ENCODE measurements at regions of chr3 and their contacts with region 1.

Region 1: DNA sequence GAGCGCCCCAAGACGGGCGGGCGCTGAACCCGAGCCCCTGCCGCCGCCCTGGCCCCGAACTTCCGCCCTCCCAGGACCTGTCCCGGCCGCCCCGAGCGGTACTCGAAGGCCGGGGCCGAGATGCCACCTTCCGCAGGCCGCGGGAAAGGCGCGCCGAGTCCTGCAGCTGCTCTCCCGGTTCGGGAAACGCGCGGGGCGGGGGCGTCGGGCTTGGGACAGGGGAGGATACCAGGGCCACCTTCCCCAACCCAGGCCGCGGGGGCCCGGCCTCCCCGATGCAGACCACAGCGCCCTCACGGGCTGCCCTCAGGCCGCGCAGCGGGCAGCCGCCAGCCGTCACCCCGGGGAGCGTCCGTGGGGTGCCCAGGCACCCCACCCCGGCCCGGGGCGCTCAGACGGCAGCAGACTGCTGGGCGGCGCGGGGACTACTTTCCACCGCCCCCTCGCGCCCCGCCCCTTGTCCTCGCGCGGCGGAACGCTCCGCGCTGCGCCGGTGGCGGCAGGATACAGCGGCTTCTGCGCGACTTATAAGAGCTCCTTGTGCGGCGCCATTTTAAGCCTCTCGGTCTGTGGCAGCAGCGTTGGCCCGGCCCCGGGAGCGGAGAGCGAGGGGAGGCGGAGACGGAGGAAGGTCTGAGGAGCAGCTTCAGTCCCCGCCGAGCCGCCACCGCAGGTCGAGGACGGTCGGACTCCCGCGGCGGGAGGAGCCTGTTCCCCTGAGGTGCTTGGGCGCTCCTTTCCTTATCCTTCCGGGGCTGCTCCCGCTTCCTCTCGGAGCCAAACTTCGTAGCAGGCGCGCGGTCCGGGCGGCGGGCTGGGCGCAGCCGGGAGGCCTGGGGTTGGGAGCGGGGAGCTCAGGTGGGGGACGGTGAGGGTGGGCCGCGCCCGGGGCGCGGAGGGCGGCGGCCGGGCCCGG is at the start of gene CTNNB1:
- DNase-seq: peak; percentile 95
- ATAC-seq: peak; percentile 86
- H3K4me3 ChIP-seq: peak within 1 kb of the TSS; percentile 69
- H3K27ac ChIP-seq: peak within 1 kb of the TSS; percentile 86
- H3K4me1 ChIP-seq: peaks cover 2% of the 10 kb centered on the region; the same call in 1 of the 2 replicates
- H3K27me3 ChIP-seq: no peaks in the 10 kb centered on the region; the same call in none of the 2 replicates
- CTCF ChIP-seq: no peak
- POLR2A ChIP-seq: peak; percentile 99
- RAD21 ChIP-seq: no peak
- total RNA-seq, gene CTNNB1: 1,415 and 1,677 TPM in 2 replicates

Region 2: GRCh38 chr3:40337136-40338108 is 861.8 kb before region 1 on chr3:
- CTCF ChIA-PET with region 1: no interaction called
- POLR2A ChIA-PET with region 1: no interaction called
- dilution Hi-C with region 1: no loop called
- in situ Hi-C with region 1: loop called (anchors 25 kb)
- intact Hi-C with region 1: no loop called
- DNase-seq: no peak
- ATAC-seq: no peak
- H3K4me3 ChIP-seq: no peak overlapping the region
- H3K27ac ChIP-seq: no peak overlapping the region
- H3K4me1 ChIP-seq: no peaks in the 10 kb centered on the region
- H3K27me3 ChIP-seq: peaks cover 2% of the 10 kb centered on the region; the same call in 1 of the 2 replicates
- CTCF ChIP-seq: no peak
- POLR2A ChIP-seq: no peak
- RAD21 ChIP-seq: no peak

Region 3: DNA sequence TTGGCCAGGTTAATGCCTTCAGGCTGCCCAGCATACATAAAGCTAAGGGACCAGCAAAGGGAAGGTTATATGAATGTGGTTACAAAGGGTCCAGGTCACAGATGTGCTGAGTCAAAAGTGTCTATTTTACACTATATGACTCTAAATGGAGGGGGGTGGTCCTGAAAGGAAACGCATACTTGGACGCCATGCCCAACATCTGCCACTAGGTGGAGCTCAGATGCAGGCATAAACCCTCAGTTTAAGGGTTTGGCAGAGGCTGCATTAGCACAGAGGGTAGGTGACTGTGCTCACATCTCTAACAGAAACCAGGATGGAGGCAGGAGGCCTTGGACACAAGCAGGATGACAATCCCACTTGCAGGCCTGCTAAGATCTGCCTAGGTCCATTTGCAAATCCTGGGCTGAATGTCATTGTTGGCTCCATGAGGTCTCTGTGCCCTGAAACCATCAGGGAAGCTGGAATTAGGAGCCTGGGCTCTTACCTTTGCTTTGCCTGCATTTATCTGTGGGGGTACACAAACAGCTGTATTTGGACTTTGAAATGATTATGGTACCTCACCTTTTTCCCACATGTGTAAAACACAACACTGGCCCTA is 618.6 kb before region 1 on chr3:
- CTCF ChIA-PET with region 1: no interaction called
- POLR2A ChIA-PET with region 1: no interaction called
- dilution Hi-C with region 1: no loop called
- in situ Hi-C with region 1: no loop called
- intact Hi-C with region 1: loop called (anchors 5 kb)
- DNase-seq: peak; percentile 60
- ATAC-seq: peak; percentile 86
- H3K4me3 ChIP-seq: no peak overlapping the region
- H3K27ac ChIP-seq: no peak overlapping the region
- H3K4me1 ChIP-seq: no peaks in the 10 kb centered on the region
- H3K27me3 ChIP-seq: peaks cover 10% of the 10 kb centered on the region; the same call in 1 of the 2 replicates
- CTCF ChIP-seq: peak; percentile 84
- POLR2A ChIP-seq: no peak
- RAD21 ChIP-seq: peak; percentile 90

Region 4: DNA sequence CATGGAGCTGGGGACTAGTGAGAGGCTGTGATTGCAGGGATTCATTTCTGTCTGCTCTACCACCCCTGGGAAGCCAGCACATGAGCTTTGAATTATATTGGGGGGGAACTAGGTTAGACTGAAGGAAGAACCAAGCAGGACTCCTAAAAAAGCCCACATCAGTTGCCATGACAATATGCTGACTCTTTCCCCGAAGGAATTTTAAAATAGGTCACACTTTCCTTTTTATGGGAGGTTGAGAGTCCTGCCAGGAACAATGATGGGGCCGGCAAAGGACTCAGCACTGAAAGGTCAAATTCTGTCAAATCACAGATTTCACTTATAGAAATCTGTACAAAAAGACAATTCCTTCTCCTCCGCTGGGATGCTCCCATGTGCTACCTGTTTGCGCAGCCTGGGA is 543.7 kb before region 1 on chr3:
- CTCF ChIA-PET with region 1: no interaction called
- POLR2A ChIA-PET with region 1: interaction called, 11 read pairs
- dilution Hi-C with region 1: no loop called
- in situ Hi-C with region 1: no loop called
- intact Hi-C with region 1: no loop called
- DNase-seq: no peak
- ATAC-seq: no peak
- H3K4me3 ChIP-seq: no peak overlapping the region
- H3K27ac ChIP-seq: no peak overlapping the region
- H3K4me1 ChIP-seq: no peaks in the 10 kb centered on the region
- H3K27me3 ChIP-seq: no peaks in the 10 kb centered on the region
- CTCF ChIP-seq: no peak
- POLR2A ChIP-seq: no peak
- RAD21 ChIP-seq: no peak

Region 5: DNA sequence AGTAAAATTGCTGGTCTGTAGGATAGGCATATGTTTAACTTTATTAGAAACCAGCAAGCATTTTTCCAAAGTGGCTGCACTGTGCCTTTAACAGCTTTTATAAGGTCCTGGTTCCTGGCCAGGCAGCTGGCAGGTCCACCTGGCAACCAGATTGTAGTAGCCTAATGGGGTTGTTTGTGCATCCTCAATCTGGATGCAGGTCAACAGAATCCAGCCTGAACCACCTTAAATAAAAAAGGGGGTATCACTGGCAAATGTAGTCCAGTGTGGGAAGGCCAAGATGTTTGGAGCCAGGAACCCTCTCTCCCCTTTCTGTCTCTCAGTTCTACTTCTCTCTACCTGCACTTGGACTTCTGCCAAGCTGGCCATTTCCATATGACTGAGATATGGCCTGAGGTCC is 474.2 kb before region 1 on chr3:
- CTCF ChIA-PET with region 1: no interaction called
- POLR2A ChIA-PET with region 1: no interaction called
- dilution Hi-C with region 1: no loop called
- in situ Hi-C with region 1: no loop called
- intact Hi-C with region 1: no loop called
- DNase-seq: no peak
- ATAC-seq: no peak
- H3K4me3 ChIP-seq: no peak overlapping the region
- H3K27ac ChIP-seq: no peak overlapping the region
- H3K4me1 ChIP-seq: no peaks in the 10 kb centered on the region
- H3K27me3 ChIP-seq: no peaks in the 10 kb centered on the region
- CTCF ChIP-seq: no peak
- POLR2A ChIP-seq: no peak
- RAD21 ChIP-seq: no peak

Region 6: DNA sequence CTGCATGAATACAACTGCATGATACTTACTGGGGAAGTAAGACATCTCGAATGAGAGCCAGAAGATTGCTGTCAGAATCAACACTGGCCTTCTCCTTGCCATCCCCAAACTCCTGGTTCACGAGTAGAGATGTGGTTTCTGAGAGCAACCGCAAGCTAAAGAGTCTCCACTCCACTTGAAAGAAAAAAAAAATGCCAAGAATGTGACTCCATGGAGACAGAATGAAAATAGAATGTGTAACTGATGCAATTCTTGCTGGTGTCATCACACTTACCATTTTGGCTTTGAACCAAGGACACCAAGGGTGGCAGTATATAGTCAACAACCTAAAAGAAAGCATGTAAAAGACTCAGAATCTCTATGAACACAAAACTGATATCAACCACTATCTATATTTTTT is 482.3 kb after region 1 on chr3:
- CTCF ChIA-PET with region 1: no interaction called
- POLR2A ChIA-PET with region 1: no interaction called
- dilution Hi-C with region 1: no loop called
- in situ Hi-C with region 1: loop called (anchors 25 kb)
- intact Hi-C with region 1: loop called (anchors 5 kb)
- DNase-seq: peak; percentile 92
- ATAC-seq: peak; percentile 53
- H3K4me3 ChIP-seq: no peak overlapping the region
- H3K27ac ChIP-seq: no peak overlapping the region
- H3K4me1 ChIP-seq: peaks cover 14% of the 10 kb centered on the region
- H3K27me3 ChIP-seq: no peaks in the 10 kb centered on the region
- CTCF ChIP-seq: no peak
- POLR2A ChIP-seq: no peak
- RAD21 ChIP-seq: peak; percentile 12; the same call in 1 of the 2 replicates

Region 7: DNA sequence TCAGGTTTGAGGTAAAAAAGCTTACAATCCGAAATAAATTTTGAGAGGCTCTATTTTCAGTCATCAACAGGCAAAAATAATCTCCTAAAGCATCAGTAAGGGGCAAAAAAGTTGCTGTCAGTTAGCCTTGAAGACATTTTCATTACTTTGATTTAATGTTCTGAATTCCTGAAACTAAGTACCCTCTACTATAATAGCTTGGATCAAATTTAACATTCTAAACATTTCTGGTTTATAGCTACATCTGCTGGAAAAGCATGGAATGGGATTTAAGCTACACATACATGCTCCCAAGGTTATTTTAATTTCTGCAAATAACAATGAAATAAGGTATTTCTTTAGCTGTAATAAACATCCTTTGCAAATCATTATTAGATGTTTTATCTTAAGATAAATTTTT is 517.3 kb after region 1 on chr3:
- CTCF ChIA-PET with region 1: no interaction called
- POLR2A ChIA-PET with region 1: no interaction called
- dilution Hi-C with region 1: no loop called
- in situ Hi-C with region 1: no loop called
- intact Hi-C with region 1: loop called (anchors 5 kb)
- DNase-seq: peak; percentile 37
- ATAC-seq: no peak
- H3K4me3 ChIP-seq: no peak overlapping the region
- H3K27ac ChIP-seq: no peak overlapping the region
- H3K4me1 ChIP-seq: no peaks in the 10 kb centered on the region; the same call in 1 of the 2 replicates
- H3K27me3 ChIP-seq: no peaks in the 10 kb centered on the region
- CTCF ChIP-seq: peak; percentile 59
- POLR2A ChIP-seq: no peak
- RAD21 ChIP-seq: peak; percentile 54

Region 8: GRCh38 chr3:41881233-41881821 is 682.1 kb after region 1 on chr3:
- CTCF ChIA-PET with region 1: no interaction called
- POLR2A ChIA-PET with region 1: no interaction called
- dilution Hi-C with region 1: no loop called
- in situ Hi-C with region 1: no loop called
- intact Hi-C with region 1: loop called (anchors 5 kb)
- DNase-seq: peak; percentile 48
- ATAC-seq: no peak
- H3K4me3 ChIP-seq: no peak overlapping the region
- H3K27ac ChIP-seq: no peak overlapping the region
- H3K4me1 ChIP-seq: no peaks in the 10 kb centered on the region
- H3K27me3 ChIP-seq: no peaks in the 10 kb centered on the region
- CTCF ChIP-seq: peak; percentile 77
- POLR2A ChIP-seq: no peak
- RAD21 ChIP-seq: peak; percentile 72